OCI-LY7 (cell line): ENCODE measurements at regions of chr4 and their contacts with region 1.

Region 1: DNA sequence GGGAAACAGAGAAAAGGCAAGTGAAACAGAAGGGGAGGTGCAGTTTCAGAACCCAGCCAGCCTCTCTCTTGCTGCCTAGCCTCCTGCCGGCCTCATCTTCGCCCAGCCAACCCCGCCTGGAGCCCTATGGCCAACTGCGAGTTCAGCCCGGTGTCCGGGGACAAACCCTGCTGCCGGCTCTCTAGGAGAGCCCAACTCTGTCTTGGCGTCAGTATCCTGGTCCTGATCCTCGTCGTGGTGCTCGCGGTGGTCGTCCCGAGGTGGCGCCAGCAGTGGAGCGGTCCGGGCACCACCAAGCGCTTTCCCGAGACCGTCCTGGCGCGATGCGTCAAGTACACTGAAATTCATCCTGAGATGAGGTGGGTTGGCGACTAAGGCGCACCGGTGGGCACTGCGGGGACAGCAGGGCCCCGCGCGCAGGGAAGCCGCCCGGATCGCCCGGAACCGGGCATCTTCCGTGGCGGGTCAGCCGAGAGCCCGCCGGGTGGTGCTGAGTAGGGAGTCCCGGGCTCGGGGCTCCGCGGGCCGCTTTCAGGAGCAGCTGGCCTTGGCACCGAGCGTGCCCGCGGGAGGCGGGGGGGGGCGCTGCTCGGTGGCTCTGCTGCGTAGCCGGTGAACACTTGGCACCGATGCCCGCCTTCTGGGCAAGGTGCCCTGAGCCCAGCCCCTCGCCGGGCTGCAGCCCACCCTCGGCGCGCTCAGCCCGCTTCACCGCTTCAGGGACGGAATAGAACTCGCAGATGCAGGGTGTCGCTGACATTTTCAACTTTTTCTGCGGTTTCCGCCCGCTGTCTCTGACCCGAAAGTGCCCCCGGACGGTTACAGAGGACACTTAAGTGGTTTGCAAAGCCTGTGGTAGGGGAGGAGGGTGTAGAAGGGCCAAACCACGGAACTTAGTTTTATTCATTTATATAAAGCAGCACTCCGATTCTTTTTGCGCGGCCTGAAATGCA is at the start of gene CD38:
- DNase-seq: peak; percentile 90
- H3K4me3 ChIP-seq: peak within 1 kb of the TSS; percentile 76
- H3K27ac ChIP-seq: peak within 1 kb of the TSS; percentile 96
- H3K4me1 ChIP-seq: peaks cover 62% of the 10 kb centered on the region
- CTCF ChIP-seq: peak; percentile 24; the same call in 1 of the 2 replicates
- total RNA-seq, gene CD38: 92.0 and 103 TPM in 2 replicates

Region 2: GRCh38 chr4:15318621-15319348 is 459.8 kb before region 1 on chr4:
- CTCF ChIA-PET with region 1: no interaction called
- POLR2A ChIA-PET with region 1: no interaction called
- intact Hi-C with region 1: no loop called
- DNase-seq: no peak
- H3K4me3 ChIP-seq: no peak overlapping the region
- H3K27ac ChIP-seq: no peak overlapping the region
- H3K4me1 ChIP-seq: no peaks in the 10 kb centered on the region
- CTCF ChIP-seq: no peak

Region 3: DNA sequence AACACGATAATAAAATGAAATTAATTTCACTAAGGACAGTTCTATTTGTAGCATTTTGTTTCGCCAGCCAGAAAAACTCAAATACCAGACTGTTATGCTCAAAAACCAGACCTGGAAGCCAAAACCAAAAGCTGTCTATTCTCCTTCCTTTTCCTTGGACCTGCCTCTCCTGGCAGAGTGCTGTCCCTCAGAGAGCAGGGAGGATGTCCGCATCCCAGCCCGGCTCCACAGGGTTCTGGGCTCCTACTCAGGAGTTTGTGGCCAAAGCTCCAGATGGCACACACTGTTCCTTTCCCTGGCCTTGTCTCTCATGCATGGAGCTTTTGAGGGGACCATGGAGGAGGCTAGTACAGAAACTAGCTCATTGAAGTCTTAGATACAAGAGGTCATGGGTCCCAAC is 392.6 kb before region 1 on chr4:
- CTCF ChIA-PET with region 1: no interaction called
- POLR2A ChIA-PET with region 1: no interaction called
- intact Hi-C with region 1: no loop called
- DNase-seq: no peak
- H3K4me3 ChIP-seq: no peak overlapping the region
- H3K27ac ChIP-seq: no peak overlapping the region
- H3K4me1 ChIP-seq: no peaks in the 10 kb centered on the region
- CTCF ChIP-seq: no peak

Region 4: DNA sequence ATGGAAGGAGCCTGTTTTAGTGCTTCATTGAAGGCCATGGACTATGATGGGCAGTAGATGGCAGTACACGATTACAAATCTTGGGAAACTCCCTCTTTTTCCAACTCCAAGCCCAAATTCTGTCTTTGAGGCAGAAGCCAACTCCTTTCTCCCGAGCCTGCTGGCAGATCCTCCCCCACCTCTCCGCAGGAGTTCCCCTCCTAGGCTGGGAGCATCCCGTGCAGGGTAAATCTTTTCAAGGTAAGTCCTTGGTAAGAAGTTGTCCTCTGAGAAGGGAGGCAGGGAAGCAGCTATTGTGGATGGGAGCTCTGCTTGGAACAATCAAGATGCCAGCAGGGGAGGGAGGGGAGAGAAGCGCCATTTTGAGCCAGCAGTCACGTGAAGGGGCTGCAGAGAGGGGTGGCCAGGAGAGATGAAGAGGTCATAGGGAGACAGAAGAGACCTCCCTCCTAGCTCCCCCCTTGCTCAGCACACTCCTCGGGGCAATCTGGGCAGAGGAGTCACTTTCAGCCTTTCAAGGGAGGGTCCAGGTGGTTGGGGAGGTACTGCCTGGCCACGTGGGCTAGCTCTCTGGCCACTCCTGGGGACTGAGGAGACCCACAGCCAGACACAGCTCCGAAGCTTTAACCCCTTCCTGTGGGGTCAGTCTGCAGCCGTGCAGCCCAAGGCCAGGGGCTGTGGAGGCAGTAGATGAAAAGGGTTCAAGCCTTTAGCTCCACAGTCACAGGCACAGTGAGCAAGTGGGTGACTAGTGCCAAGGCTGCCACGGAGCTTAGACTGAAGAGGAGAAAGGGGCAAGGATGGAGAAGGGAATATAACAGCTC is 299.3 kb before region 1 on chr4:
- CTCF ChIA-PET with region 1: no interaction called
- POLR2A ChIA-PET with region 1: no interaction called
- intact Hi-C with region 1: no loop called
- DNase-seq: peak; percentile 44
- H3K4me3 ChIP-seq: no peak overlapping the region
- H3K27ac ChIP-seq: no peak overlapping the region
- H3K4me1 ChIP-seq: no peaks in the 10 kb centered on the region
- CTCF ChIP-seq: peak; percentile 80

Region 5: DNA sequence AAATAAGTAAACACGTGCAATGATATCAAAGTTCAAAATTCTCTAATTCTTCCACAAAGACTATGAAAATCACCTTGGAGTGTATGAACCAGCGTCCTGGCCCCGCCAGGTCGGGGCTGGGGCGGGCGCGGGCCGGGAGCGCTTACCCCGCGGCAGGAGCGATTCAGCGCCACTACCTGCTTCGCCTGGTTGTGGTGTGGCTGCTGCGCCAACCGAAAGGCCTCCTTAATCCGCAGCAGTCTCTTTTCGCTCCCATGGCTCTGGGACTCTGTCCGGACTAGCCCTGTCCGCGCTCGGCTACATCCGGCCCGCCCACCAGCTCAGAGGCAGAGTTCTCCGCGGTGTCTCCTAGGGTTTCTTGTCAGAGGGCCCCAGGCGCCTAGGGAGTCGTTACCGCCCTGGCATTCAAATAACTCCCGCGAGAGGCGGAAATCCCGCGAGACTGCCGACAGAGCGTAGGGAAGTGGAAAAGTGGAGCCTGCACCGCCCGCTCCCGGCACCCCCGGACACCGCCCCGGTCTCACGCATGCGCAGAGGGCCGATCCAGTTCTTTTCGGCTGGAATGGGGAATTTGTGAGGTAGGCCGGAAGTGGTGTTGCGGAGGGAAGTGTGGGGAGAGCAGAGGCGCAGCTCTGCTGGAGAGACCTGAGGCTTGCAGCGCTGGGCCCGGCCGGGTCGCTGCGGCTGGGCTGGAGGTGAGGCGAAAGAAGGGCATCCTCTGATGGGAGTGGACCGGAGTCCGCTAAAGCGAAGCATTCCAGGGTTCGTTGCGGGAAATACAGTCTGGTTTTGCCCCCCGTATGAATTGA is 97.2 kb before region 1 on chr4 and contains the start of gene FAM200B:
- CTCF ChIA-PET with region 1: no interaction called
- POLR2A ChIA-PET with region 1: interaction called, 8 read pairs
- intact Hi-C with region 1: loop called (anchors 1 kb)
- DNase-seq: peak; percentile 99
- H3K4me3 ChIP-seq: peak within 1 kb of the TSS; percentile 90
- H3K27ac ChIP-seq: peak within 1 kb of the TSS; percentile 90
- H3K4me1 ChIP-seq: peaks cover 55% of the 10 kb centered on the region
- CTCF ChIP-seq: no peak
- total RNA-seq, gene FAM200B: 11.0 and 11.5 TPM in 2 replicates

Region 6: GRCh38 chr4:15756361-15756861 is 22.2 kb before region 1 on chr4:
- CTCF ChIA-PET with region 1: interaction called, 5 read pairs
- POLR2A ChIA-PET with region 1: interaction called, 21 read pairs
- intact Hi-C with region 1: no loop called
- DNase-seq: peak; percentile 67
- H3K4me3 ChIP-seq: peak overlapping the region; percentile 51
- H3K27ac ChIP-seq: peak overlapping the region; percentile 57
- H3K4me1 ChIP-seq: peaks cover 39% of the 10 kb centered on the region
- CTCF ChIP-seq: peak; percentile 70

Region 7: GRCh38 chr4:15799701-15800100 is 21.1 kb after region 1 on chr4:
- CTCF ChIA-PET with region 1: no interaction called
- POLR2A ChIA-PET with region 1: interaction called, 15 read pairs
- intact Hi-C with region 1: loop called (anchors 2 kb)
- DNase-seq: peak; percentile 56
- H3K4me3 ChIP-seq: peak overlapping the region; percentile 26
- H3K27ac ChIP-seq: peak overlapping the region; percentile 81
- H3K4me1 ChIP-seq: peaks cover 72% of the 10 kb centered on the region
- CTCF ChIP-seq: no peak

Region 8: DNA sequence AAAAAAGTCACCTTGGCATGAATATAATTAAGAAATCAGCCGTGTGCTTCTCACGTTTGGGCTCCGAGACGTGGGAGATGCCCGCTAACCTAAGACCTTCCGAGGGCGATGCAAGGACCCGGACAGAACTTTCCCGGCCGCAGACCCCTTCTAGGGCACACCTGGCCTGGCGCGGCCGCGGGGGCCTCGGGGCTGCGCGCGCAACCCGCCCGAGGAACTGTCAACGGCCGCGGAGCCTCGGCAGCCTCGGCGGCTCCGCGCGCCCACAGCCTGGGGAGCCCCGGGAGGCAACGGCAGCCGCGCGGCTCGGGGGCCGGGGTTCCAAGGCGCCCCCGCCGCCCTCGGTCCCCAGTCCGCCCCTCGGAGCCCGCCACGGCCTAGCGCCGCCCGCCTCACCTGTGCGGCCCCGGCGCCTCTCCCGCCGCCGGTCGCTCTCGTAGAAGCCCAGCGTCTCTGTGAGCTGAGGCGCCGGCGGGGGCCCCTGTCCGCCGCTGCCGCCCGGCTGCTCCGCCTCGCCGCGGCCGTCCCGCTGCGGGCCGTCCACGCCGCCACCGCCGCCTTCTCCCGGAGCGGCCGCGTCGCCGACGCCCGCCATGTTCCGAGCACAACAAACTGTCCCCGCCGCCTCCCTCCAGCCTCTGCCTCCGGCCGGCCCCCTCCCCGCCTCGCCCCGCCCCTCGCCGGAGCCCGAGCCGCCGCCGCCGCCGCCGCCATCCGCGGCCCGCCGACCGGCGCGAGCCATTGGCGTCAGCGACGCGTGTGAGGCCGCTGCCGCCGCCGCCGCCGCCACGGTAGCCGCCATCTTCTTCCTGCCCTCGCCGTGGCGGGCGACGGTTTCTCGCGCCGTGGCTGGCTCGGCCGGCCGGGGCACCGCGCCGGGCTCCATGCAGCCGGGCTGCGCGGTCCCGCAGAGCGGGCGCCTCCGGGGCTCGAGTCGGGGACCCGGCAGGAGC is 447.6 kb after region 1 on chr4 and contains the start of gene TAPT1:
- CTCF ChIA-PET with region 1: no interaction called
- POLR2A ChIA-PET with region 1: no interaction called
- intact Hi-C with region 1: loop called (anchors 5 kb)
- DNase-seq: peak; percentile 81
- H3K4me3 ChIP-seq: peak within 1 kb of the TSS; percentile 71
- H3K27ac ChIP-seq: peak within 1 kb of the TSS; percentile 77
- H3K4me1 ChIP-seq: peaks cover 63% of the 10 kb centered on the region
- CTCF ChIP-seq: no peak
- total RNA-seq, gene TAPT1: 23.2 and 34.3 TPM in 2 replicates